RWPE1 (cell line): ENCODE measurements at regions of chr18 and their contacts with region 1.

Region 1: GRCh38 chr18:48061781-48062570 is 131.5 kb upstream of the SMAD2 start:
- DNase-seq: no peak
- H3K27ac ChIP-seq: peak overlapping the region; percentile 55
- CTCF ChIP-seq: no peak

Region 2: DNA sequence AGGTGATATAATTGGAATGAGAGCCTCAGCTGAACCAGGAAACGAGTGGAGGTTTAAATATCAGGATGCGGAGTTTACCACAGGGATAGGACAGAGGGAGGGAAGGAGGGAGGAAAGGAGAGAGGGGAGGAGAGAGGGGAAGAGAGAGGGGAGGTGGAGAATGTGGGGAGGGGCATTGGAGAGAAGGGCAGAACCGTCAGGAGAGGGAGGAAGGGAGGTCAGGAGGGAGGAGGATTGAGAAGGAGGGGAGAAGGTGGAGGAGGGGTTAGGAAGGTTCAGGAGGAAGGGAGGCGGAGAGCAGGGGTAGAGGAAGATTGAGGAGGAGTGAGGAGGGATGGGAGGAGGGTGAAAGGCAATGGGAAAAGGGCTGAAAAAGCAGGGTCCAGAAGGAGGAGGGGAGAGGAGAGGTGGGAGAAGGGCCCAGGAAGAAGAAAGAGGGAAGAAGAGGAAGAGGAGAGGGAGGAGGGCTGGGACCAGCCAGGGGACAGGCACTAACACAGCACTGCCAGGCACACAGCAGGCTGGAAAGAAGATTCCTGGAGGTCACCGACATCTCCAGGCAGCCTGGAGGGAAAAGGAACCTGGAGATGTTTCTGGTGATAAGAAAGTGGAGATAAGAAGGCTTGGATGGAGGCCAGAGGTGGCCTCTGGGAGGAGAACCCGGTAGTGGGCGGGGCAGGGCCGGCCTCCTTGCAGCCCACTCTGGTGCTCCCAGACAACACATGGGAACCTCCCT is 45.2 kb after region 1 on chr18:
- CTCF ChIA-PET with region 1: interaction called, 10 read pairs
- POLR2A ChIA-PET with region 1: no interaction called
- DNase-seq: no peak
- H3K27ac ChIP-seq: no peak overlapping the region
- CTCF ChIP-seq: no peak